ENCODE measurements at regions of chr20 and their contacts with region 1.

Region 1: DNA sequence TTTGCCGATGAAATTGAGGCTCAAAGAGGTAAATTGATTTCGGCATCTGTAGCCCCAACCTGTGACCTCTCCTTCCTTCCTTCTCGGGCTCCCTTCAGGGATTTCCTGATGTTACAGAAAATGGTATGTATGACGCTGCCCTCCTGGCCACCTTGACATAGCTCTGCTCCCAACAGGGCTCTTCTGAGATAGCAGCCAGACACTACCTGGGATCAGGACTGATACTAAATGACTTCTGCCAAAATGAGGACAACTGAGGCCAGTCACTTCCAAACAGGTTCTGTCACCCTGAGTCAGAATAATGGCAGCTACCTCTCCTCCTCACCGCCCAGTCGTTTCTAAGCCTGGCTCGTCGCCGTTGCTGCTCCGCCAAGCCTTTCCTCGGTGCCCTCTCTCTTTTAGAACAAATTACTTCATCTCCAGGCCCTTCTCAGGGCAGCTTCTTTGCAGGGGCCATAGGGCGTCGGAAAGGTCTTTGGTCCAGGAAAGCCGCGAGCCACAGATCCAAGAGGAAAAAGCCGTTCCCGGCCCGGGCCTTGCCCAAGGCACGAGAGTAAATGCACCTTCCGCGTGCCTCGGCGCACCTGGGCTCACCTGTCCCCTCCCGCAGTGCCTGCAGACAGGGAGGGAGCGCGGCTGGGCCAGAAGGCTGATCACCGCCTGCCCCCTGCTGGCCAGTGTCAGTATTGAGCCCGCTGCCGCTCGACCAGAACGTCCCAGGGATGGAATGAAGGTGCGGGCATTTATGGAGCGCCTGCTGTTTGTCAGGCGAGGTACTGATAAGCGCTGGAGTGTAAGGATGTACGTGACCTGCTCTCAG is 904 bp upstream of the LPIN3 start:
- DNase-seq: peak; percentile 84 to 88
- H3K4me3 ChIP-seq: peak overlapping the region; percentile 33 to 40
- H3K27ac ChIP-seq: peak overlapping the region; percentile 81 to 86
- H3K4me1 ChIP-seq: no peaks in the 10 kb centered on the region
- H3K27me3 ChIP-seq: no peaks in the 10 kb centered on the region
- CTCF ChIP-seq: peak; percentile 97 to 99 (median 98)
- POLR2A ChIP-seq: peak in 1 of 2 donors; percentile 26

Region 2: GRCh38 chr20:41173161-41173721 is 166.5 kb before region 1 on chr20:
- intact Hi-C with region 1: loop called (anchors 2 kb)
- DNase-seq: peak; percentile 91 to 92
- H3K4me3 ChIP-seq: no peak overlapping the region
- H3K27ac ChIP-seq: peak overlapping the region; percentile 71 to 85
- H3K4me1 ChIP-seq: peaks cover 0 to 11% of the 10 kb centered on the region in 2 donors
- H3K27me3 ChIP-seq: no peaks in the 10 kb centered on the region
- CTCF ChIP-seq: peak; percentile 98 to 99 (median 98)
- POLR2A ChIP-seq: no peak

Region 3: GRCh38 chr20:41232973-41233926 is 106.5 kb before region 1 on chr20:
- intact Hi-C with region 1: loop called (anchors 10 kb)
- DNase-seq: no peak
- H3K4me3 ChIP-seq: no peak overlapping the region
- H3K27ac ChIP-seq: peak overlapping the region; percentile 79 to 84
- H3K4me1 ChIP-seq: peaks cover 7 to 8% of the 10 kb centered on the region in 2 donors
- H3K27me3 ChIP-seq: no peaks in the 10 kb centered on the region
- CTCF ChIP-seq: no peak
- POLR2A ChIP-seq: no peak

Region 4: GRCh38 chr20:41411391-41411847 is 71.7 kb after region 1 on chr20:
- intact Hi-C with region 1: loop called (anchors 10 kb)
- DNase-seq: no peak
- H3K4me3 ChIP-seq: no peak overlapping the region
- H3K27ac ChIP-seq: peak overlapping the region; percentile 64 to 71
- H3K4me1 ChIP-seq: no peaks in the 10 kb centered on the region
- H3K27me3 ChIP-seq: no peaks in the 10 kb centered on the region
- CTCF ChIP-seq: peak; percentile 34 to 56 (median 35)
- POLR2A ChIP-seq: no peak

Region 5: GRCh38 chr20:41686961-41687360 is 347.2 kb after region 1 on chr20:
- intact Hi-C with region 1: no loop called
- DNase-seq: no peak
- H3K4me3 ChIP-seq: no peak overlapping the region
- H3K27ac ChIP-seq: no peak overlapping the region
- H3K4me1 ChIP-seq: no peaks in the 10 kb centered on the region
- H3K27me3 ChIP-seq: no peaks in the 10 kb centered on the region
- CTCF ChIP-seq: no peak
- POLR2A ChIP-seq: no peak

Measured in uterus (tissue), 4 donors.